PC-9 (cell line): ENCODE measurements at regions of chr22 and their contacts with region 1.

Region 1: DNA sequence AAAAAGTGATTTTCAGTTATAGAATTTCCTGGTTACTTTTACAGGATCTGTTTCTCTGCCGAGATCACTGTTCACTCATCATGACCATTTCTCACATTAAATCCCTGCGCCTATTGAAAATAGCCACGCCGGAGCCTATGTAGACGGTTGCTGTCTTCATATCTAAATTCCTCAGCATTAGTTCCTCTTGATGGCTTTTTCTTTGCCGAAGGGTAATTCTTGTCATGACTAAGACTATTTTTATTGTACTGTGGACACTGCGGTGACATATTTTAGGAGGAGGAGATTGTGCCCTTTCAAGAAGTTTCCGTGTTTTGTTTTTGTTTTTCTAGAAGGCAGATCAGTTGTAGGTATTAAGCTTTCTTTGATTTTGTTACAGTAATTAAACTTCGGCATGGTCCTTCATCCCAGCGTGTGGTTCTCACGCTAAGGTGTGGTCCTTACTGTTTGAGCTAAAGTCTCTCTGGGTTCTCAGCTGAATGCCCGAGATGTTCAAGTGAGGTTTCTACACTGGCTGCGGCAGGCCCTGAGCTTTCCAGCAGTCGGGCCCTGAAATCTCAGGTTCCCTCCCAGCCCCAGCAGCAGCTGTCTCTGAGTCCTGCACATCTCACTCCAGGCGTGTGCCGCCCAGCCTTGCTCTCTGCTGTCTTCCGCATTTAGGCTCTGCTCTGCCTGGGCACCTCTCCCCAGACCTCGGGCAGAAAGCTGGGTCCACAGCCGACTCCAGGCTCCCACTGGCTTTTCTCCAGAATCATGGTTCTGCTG is 1110.5 kb downstream of the TBC1D22A start:
- DNase-seq: peak; percentile 43 to 99
- H3K4me3 ChIP-seq: peak overlapping the region; percentile 35; the same call in 1 of the 2 replicates
- H3K27ac ChIP-seq: peak overlapping the region; percentile 79
- H3K4me1 ChIP-seq: peaks cover 31% of the 10 kb centered on the region
- H3K27me3 ChIP-seq: no peaks in the 10 kb centered on the region
- CTCF ChIP-seq: no peak

Region 2: GRCh38 chr22:47757741-47758140 is 115.2 kb before region 1 on chr22:
- CTCF ChIA-PET with region 1: no interaction called
- POLR2A ChIA-PET with region 1: no interaction called
- intact Hi-C with region 1: no loop called
- DNase-seq: no peak
- H3K4me3 ChIP-seq: no peak overlapping the region
- H3K27ac ChIP-seq: no peak overlapping the region
- H3K4me1 ChIP-seq: no peaks in the 10 kb centered on the region
- H3K27me3 ChIP-seq: no peaks in the 10 kb centered on the region
- CTCF ChIP-seq: no peak

Region 3: DNA sequence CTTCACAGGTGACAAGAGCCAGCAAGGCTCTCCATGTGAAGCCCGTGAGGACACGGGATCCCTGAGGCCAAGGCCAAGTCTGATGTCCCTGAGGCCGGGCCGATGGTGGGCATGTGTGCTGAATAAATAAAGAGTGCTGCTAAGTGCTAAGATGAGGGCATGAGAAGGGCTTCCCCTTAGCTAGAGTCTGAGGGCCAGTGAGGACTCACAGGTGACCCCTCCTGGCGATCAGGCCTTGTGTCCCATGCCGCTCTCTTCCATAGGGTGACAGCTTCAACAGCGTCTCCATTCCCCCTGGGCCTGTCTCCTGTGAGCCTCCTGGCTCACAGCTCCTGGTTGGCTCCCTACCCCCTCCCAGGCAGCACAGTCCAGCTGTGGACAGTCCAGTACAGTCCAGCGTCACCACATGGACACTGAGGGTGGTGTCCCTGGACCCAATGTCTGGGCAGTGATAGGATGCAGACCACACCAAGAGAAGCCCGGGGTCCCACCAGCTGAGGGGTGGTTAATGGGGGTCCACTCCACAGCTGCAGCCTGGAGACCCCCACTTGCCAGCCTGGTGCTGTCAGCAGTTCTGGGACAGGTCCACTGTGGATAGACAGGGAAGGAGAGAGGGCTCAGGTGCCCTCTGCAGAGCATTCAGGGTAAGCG is 77.4 kb before region 1 on chr22:
- CTCF ChIA-PET with region 1: no interaction called
- POLR2A ChIA-PET with region 1: interaction called, 21 read pairs
- intact Hi-C with region 1: no loop called
- DNase-seq: no peak
- H3K4me3 ChIP-seq: no peak overlapping the region
- H3K27ac ChIP-seq: no peak overlapping the region
- H3K4me1 ChIP-seq: no peaks in the 10 kb centered on the region
- H3K27me3 ChIP-seq: no peaks in the 10 kb centered on the region
- CTCF ChIP-seq: no peak

Region 4: GRCh38 chr22:47837703-47838102 is 35.2 kb before region 1 on chr22:
- CTCF ChIA-PET with region 1: no interaction called
- POLR2A ChIA-PET with region 1: no interaction called
- intact Hi-C with region 1: loop called (anchors 1 kb)
- DNase-seq: peak in 1 of 2 experiments; percentile 20
- H3K4me3 ChIP-seq: no peak overlapping the region
- H3K27ac ChIP-seq: no peak overlapping the region
- H3K4me1 ChIP-seq: peaks cover 22% of the 10 kb centered on the region
- H3K27me3 ChIP-seq: no peaks in the 10 kb centered on the region
- CTCF ChIP-seq: peak; percentile 76

Region 5: DNA sequence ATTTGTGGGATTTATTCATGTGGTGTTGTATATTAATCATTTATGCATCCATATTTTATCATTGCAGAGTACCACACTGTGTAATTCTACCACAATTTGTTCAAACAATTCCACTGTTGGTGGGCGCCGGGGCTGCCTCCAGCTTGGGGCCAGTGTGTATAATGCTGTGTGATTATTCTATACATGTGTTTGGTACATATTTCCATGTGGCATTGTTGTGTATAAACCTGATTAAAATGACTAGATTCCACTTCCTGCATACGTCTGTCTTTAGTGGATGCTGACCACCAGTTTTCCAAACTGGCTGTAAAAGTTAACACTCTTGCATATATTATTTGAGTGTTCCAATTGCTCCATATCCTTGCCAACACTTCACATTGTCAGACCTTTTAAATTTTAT is 103.3 kb after region 1 on chr22:
- CTCF ChIA-PET with region 1: no interaction called
- POLR2A ChIA-PET with region 1: no interaction called
- intact Hi-C with region 1: no loop called
- DNase-seq: no peak
- H3K4me3 ChIP-seq: no peak overlapping the region
- H3K27ac ChIP-seq: no peak overlapping the region
- H3K4me1 ChIP-seq: no peaks in the 10 kb centered on the region
- H3K27me3 ChIP-seq: peaks cover 53% of the 10 kb centered on the region
- CTCF ChIP-seq: no peak